ENCODE measurements at regions of chr2 and their contacts with region 1.

Region 1: GRCh38 chr2:235045336-235045972 is 93.6 kb downstream of the SH3BP4 start:
- DNase-seq: peak in 1 of 9 experiments; percentile 37
- ATAC-seq: no peak
- H3K4me3 ChIP-seq: no peak overlapping the region
- H3K4me3 Mint-ChIP-seq: no peak overlapping the region
- H3K27ac ChIP-seq: no peak overlapping the region
- H3K27ac Mint-ChIP-seq: no peak overlapping the region
- H3K4me1 ChIP-seq: no peaks in the 10 kb centered on the region
- H3K4me1 Mint-ChIP-seq: peaks cover 11% of the 10 kb centered on the region
- H3K27me3 ChIP-seq: no peaks in the 10 kb centered on the region
- H3K27me3 Mint-ChIP-seq: peaks cover 10% of the 10 kb centered on the region
- CTCF ChIP-seq: no peak

Region 2: GRCh38 chr2:235021752-235022151 is 23.7 kb before region 1 on chr2:
- CTCF ChIA-PET with region 1: no interaction called
- POLR2A ChIA-PET with region 1: no interaction called
- intact Hi-C with region 1: loop called in 1 of 2 experiments (anchors 1 kb)
- DNase-seq: no peak
- ATAC-seq: no peak
- H3K4me3 ChIP-seq: no peak overlapping the region
- H3K4me3 Mint-ChIP-seq: no peak overlapping the region
- H3K27ac ChIP-seq: no peak overlapping the region
- H3K27ac Mint-ChIP-seq: no peak overlapping the region
- H3K4me1 ChIP-seq: no peaks in the 10 kb centered on the region
- H3K4me1 Mint-ChIP-seq: no peaks in the 10 kb centered on the region
- H3K27me3 ChIP-seq: no peaks in the 10 kb centered on the region
- H3K27me3 Mint-ChIP-seq: peaks cover 2% of the 10 kb centered on the region
- CTCF ChIP-seq: no peak

Region 3: DNA sequence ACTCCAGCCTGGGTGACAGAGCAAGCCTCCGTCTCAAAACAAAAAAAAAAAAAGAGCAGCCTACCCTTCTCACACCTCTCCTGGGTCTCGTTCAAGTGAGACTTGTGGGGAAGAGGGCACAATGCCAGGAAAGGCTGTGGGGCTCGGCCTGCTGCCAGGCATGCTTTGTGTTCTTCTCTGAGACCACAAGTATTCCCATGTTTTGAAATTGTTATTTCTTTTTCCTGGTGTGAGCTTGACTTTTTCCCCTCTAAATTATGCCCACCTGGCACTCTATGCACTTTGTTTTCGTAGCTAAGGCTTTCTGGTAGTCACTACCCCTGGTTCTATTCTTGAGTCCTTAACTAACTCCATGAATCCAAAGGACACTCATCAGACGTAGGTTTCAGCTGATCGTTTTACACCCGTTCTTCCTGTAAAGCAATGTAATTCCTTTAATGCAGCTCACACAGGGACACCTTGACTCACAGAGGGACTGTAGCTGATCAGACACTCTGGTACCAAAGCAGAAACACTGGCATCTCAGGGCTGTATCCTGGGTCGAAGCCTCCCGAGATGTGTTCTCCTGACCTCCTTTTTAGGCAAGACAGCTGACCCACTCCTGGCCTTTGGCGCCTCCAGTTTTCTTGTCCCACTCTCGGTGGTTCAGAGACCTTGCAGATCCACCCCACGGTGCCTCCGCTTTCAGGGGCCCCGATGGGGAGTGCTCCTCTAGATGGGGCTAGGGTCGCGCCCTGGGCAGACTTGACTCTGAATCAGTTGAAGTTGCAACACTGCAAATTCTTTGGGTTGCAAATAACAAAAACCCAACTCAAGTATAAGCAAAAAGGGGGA is 255.1 kb after region 1 on chr2:
- CTCF ChIA-PET with region 1: no interaction called
- POLR2A ChIA-PET with region 1: no interaction called
- intact Hi-C with region 1: no loop called
- DNase-seq: no peak
- ATAC-seq: no peak
- H3K4me3 ChIP-seq: no peak overlapping the region
- H3K4me3 Mint-ChIP-seq: no peak overlapping the region
- H3K27ac ChIP-seq: no peak overlapping the region
- H3K27ac Mint-ChIP-seq: no peak overlapping the region
- H3K4me1 ChIP-seq: no peaks in the 10 kb centered on the region
- H3K4me1 Mint-ChIP-seq: no peaks in the 10 kb centered on the region
- H3K27me3 ChIP-seq: no peaks in the 10 kb centered on the region
- H3K27me3 Mint-ChIP-seq: peaks cover 30% of the 10 kb centered on the region
- CTCF ChIP-seq: no peak

Region 4: DNA sequence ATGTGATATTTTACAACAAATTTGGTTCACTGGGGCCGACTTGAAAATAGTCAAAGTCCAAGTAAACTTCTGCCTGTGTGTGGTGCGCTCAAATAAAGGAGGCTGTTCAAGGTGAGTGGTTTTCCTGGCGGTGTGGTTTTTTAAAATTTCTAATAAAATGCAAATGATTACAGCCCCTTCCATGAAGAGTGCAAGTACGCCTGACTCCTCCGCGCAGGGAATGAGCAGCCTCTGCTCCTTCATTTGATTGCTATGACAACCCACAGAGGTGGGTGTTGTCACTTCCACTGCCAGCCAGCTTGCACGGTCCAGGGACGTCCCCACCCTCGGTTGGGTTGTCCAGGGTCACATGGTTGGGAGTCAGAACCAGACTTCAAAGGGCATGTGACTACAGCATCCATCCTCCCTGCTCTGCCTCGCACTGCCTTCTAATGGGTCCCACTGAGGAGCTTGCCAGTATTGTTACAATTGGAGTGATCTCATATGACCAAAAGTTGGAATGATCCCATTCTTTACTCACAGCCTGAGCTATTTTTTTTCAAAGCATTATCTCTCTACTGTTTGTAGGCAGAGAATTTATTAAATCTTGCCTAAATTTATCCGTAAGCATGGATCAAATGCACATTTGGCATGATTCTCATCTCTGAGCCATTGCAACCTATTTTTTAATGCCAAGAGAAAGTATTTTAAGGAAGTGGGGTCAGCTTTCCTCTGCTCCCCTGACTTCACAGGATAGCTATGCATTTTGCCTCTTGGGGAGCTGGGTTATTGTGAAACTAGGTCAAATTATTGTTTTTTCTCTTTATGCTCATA is 569.7 kb after region 1 on chr2:
- CTCF ChIA-PET with region 1: no interaction called
- POLR2A ChIA-PET with region 1: no interaction called
- intact Hi-C with region 1: no loop called
- DNase-seq: no peak
- ATAC-seq: no peak
- H3K4me3 ChIP-seq: no peak overlapping the region
- H3K4me3 Mint-ChIP-seq: no peak overlapping the region
- H3K27ac ChIP-seq: no peak overlapping the region
- H3K27ac Mint-ChIP-seq: no peak overlapping the region
- H3K4me1 ChIP-seq: no peaks in the 10 kb centered on the region
- H3K4me1 Mint-ChIP-seq: peaks cover 8% of the 10 kb centered on the region
- H3K27me3 ChIP-seq: no peaks in the 10 kb centered on the region
- H3K27me3 Mint-ChIP-seq: peaks cover 8% of the 10 kb centered on the region
- CTCF ChIP-seq: no peak